H1 (cell line): ENCODE measurements at regions of chr5 and their contacts with region 1.

Region 1: GRCh38 chr5:95961617-95962474 is at the start of gene ELL2:
- DNase-seq: peak; percentile 93 to 97
- H3K4me3 ChIP-seq: peak within 1 kb of the TSS; percentile 62 to 91 (median 82)
- H3K27ac ChIP-seq: peak within 1 kb of the TSS; percentile 87; the same call in 1 of the 2 replicates
- H3K4me1 ChIP-seq: peaks cover 13 to 27% (median 18%) of the 10 kb centered on the region in 4 experiments; a peak in 6 of 7 replicates
- H3K27me3 ChIP-seq: peaks cover 0 to 12% (median 9%) of the 10 kb centered on the region in 4 experiments; a peak in 5 of 7 replicates
- CTCF ChIP-seq: no peak
- EP300 ChIP-seq: no peak
- POLR2A ChIP-seq: peak; percentile 47 to 52; a peak in 2 of 3 replicates
- RAD21 ChIP-seq: no peak
- total RNA-seq, gene ELL2: 21.7 and 29.4 TPM in 2 replicates

Region 2: GRCh38 chr5:95892780-95893354 is 69.0 kb before region 1 on chr5:
- CTCF ChIA-PET with region 1: interaction called, 12 read pairs
- POLR2A ChIA-PET with region 1: interaction called, 5 read pairs
- DNase-seq: no peak
- H3K4me3 ChIP-seq: no peak overlapping the region
- H3K27ac ChIP-seq: no peak overlapping the region
- H3K4me1 ChIP-seq: peaks cover 0 to 14% (median 7%) of the 10 kb centered on the region in 4 experiments; a peak in 4 of 7 replicates
- H3K27me3 ChIP-seq: no peaks in the 10 kb centered on the region
- CTCF ChIP-seq: peak; percentile 47 to 64 (median 63)
- EP300 ChIP-seq: no peak
- POLR2A ChIP-seq: no peak
- RAD21 ChIP-seq: peak; percentile 82 to 85

Region 3: DNA sequence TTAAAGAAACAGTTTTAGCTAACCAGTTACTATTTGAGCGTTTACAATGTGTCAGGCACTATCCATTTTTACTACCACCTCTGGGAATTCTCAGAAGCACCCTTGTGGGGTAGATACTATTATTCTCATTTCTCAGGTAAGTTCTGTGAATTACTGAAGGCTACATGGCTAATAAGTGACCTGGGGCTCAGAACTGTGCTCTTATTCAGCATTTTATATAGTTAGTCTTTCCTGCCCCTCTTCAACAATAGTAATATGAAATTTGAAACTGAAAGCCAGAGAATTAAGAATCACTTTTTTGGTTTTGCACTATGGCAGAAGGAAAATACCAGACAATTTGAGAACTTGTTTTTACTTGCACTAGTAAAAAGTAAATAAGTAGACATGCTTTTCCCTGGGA is 12.0 kb before region 1 on chr5:
- CTCF ChIA-PET with region 1: interaction called, 11 read pairs
- POLR2A ChIA-PET with region 1: interaction called, 5 read pairs
- DNase-seq: no peak
- H3K4me3 ChIP-seq: no peak overlapping the region
- H3K27ac ChIP-seq: no peak overlapping the region
- H3K4me1 ChIP-seq: peaks cover 0 to 2% (median 0%) of the 10 kb centered on the region in 4 experiments; a peak in 1 of 7 replicates
- H3K27me3 ChIP-seq: no peaks in the 10 kb centered on the region
- CTCF ChIP-seq: no peak
- EP300 ChIP-seq: no peak
- POLR2A ChIP-seq: no peak
- RAD21 ChIP-seq: no peak